Thyroid gland (tissue), 4 donors: ENCODE measurements at regions of chr4 and their contacts with region 1.

Region 1: GRCh38 chr4:26410385-26411293 is 79.6 kb downstream of the CCKAR start:
- DNase-seq: no peak
- H3K4me3 ChIP-seq: no peak overlapping the region
- H3K27ac ChIP-seq: no peak overlapping the region
- H3K4me1 ChIP-seq: peaks cover 10 to 15% of the 10 kb centered on the region in 2 donors
- H3K27me3 ChIP-seq: no peaks in the 10 kb centered on the region
- CTCF ChIP-seq: peak; percentile 44 to 77 (median 65)
- POLR2A ChIP-seq: no peak

Region 2: GRCh38 chr4:25986807-25987206 is 423.8 kb before region 1 on chr4:
- intact Hi-C with region 1: loop called (anchors 5 kb)
- DNase-seq: no peak
- H3K4me3 ChIP-seq: no peak overlapping the region
- H3K27ac ChIP-seq: no peak overlapping the region
- H3K4me1 ChIP-seq: peaks cover 0 to 5% of the 10 kb centered on the region in 2 donors
- H3K27me3 ChIP-seq: no peaks in the 10 kb centered on the region
- CTCF ChIP-seq: no peak
- POLR2A ChIP-seq: no peak

Region 3: DNA sequence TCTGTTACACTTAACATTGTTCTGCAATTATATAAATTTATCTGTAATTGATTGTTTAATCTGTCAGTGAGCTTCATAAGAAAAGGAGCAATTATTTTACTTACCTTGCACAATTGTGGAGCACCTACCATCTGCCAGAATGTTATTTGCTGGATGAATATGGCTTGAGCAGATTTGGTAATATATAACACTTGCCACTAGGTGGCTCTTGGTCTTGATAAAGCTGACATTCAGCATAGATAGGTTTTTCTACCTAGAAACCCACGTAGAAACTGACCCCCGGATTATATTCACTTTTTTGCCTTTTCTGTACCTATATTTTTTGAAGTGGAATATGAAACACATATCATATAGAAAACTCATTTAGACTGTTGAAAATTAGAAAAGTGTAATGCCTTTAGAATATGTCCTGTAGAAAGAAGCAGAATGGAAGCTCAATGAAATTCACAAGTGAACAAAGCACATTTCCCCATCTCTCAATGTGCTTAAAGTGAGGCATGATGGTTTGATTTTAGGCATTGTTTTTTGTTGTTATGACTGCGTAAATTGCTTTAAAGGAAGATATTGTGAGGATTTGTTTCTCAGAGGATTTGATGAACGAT is 80.4 kb before region 1 on chr4:
- intact Hi-C with region 1: loop called (anchors 5 kb)
- DNase-seq: no peak
- H3K4me3 ChIP-seq: no peak overlapping the region
- H3K27ac ChIP-seq: peak overlapping the region in 1 of 3 donors; percentile 36
- H3K4me1 ChIP-seq: peaks cover 21 to 26% of the 10 kb centered on the region in 2 donors
- H3K27me3 ChIP-seq: no peaks in the 10 kb centered on the region
- CTCF ChIP-seq: peak; percentile 43 to 70 (median 62)
- POLR2A ChIP-seq: no peak

Region 4: GRCh38 chr4:26372525-26373172 is 38.0 kb before region 1 on chr4:
- intact Hi-C with region 1: no loop called
- DNase-seq: peak in 1 of 2 donors; percentile 7
- H3K4me3 ChIP-seq: no peak overlapping the region
- H3K27ac ChIP-seq: no peak overlapping the region
- H3K4me1 ChIP-seq: peaks cover 23 to 30% of the 10 kb centered on the region in 2 donors
- H3K27me3 ChIP-seq: no peaks in the 10 kb centered on the region
- CTCF ChIP-seq: no peak
- POLR2A ChIP-seq: no peak